Activated CD4-positive, alpha-beta T cell treated with anti-CD3 and anti-CD28 coated beads, Interleukin-2, amount 10 ng/mL, durations not matched to agents 24 days and 14 days (primary cell): ENCODE measurements at regions of chr6 and their contacts with region 1.

Region 1: GRCh38 chr6:39347906-39348585 is 25.5 kb upstream of the KCNK16 start:
- DNase-seq: peak; percentile 88
- H3K4me3 Mint-ChIP-seq: no peak overlapping the region
- H3K27ac Mint-ChIP-seq: no peak overlapping the region
- H3K4me1 Mint-ChIP-seq: peaks cover 2% of the 10 kb centered on the region
- H3K27me3 Mint-ChIP-seq: no peaks in the 10 kb centered on the region

Region 2: DNA sequence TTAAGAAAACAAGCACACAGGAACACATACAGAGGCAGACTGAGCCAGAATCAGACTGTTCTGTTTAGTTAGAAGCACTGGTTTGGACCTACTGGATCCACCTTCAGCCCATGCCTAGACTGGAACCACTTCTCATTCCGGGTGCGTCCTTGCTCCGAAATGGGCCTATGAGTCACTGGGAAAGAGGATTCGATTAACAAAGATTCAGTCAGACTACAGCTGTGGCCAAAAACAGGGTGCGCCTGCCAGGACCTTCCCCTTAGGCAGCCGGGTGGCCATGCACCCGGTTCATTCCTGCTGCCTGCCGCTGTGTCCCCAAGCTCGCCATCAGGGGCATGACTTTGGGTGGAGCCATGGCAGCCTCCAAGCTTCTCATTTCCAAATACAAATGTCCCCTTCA is 104.2 kb before region 1 on chr6:
- intact Hi-C with region 1: no loop called
- DNase-seq: no peak
- H3K4me3 Mint-ChIP-seq: no peak overlapping the region
- H3K27ac Mint-ChIP-seq: no peak overlapping the region
- H3K4me1 Mint-ChIP-seq: peaks cover 7% of the 10 kb centered on the region
- H3K27me3 Mint-ChIP-seq: peaks cover 4% of the 10 kb centered on the region

Region 3: GRCh38 chr6:39309942-39310531 is 38.0 kb before region 1 on chr6:
- intact Hi-C with region 1: no loop called
- DNase-seq: peak; percentile 89
- H3K4me3 Mint-ChIP-seq: no peak overlapping the region
- H3K27ac Mint-ChIP-seq: no peak overlapping the region
- H3K4me1 Mint-ChIP-seq: no peaks in the 10 kb centered on the region
- H3K27me3 Mint-ChIP-seq: peaks cover 24% of the 10 kb centered on the region

Region 4: GRCh38 chr6:40308533-40309306 is 960.7 kb after region 1 on chr6:
- intact Hi-C with region 1: loop called (anchors 2 kb)
- DNase-seq: peak; percentile 92
- H3K4me3 Mint-ChIP-seq: no peak overlapping the region
- H3K27ac Mint-ChIP-seq: no peak overlapping the region
- H3K4me1 Mint-ChIP-seq: peaks cover 4% of the 10 kb centered on the region
- H3K27me3 Mint-ChIP-seq: peaks cover 39% of the 10 kb centered on the region